Activated T-helper 1 cell treated with anti-CD3 and anti-CD28 coated beads, Interleukin-12 subunit alpha, Interleukin-12 subunit beta, Interleukin-2, Interleukin-4 antibody, amounts not matched to agents 30 ng/mL and 10 ng/mL and 1 ng/mL, durations not matched to agents 14 hours and 24 hours and 36 hours (primary cell): ENCODE measurements at regions of chr17 and their contacts with region 1.

Region 1: GRCh38 chr17:46159686-46160085 is 33.5 kb downstream of the KANSL1 start:
- DNase-seq: no peak
- H3K4me3 Mint-ChIP-seq: no peak overlapping the region
- H3K27ac Mint-ChIP-seq: no peak overlapping the region
- H3K4me1 Mint-ChIP-seq: peaks cover 80% of the 10 kb centered on the region
- H3K27me3 Mint-ChIP-seq: no peaks in the 10 kb centered on the region

Region 2: DNA sequence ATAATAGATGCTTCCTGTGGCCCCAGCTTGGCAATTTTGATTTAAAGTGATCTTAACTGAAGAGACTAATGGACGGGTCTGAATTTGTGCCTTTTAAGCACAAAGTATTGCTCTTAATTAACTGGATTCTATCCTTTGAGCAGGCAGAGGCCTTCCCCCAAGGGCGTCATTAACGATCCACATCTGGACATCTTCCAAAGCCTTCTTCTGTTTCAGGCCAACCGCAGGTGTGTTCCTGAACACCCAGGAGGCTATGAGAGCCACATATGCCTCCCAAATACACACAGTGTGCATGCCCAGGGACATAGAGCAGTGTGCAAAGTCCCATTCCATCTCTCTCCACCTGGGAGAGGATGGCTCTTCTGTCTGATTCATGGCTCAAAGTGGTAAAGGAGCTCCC is 223.1 kb before region 1 on chr17:
- intact Hi-C with region 1: no loop called
- DNase-seq: no peak
- H3K4me3 Mint-ChIP-seq: no peak overlapping the region
- H3K27ac Mint-ChIP-seq: no peak overlapping the region
- H3K4me1 Mint-ChIP-seq: no peaks in the 10 kb centered on the region
- H3K27me3 Mint-ChIP-seq: peaks cover 33% of the 10 kb centered on the region

Region 3: GRCh38 chr17:46013502-46014165 is 146.1 kb before region 1 on chr17:
- intact Hi-C with region 1: no loop called
- DNase-seq: no peak
- H3K4me3 Mint-ChIP-seq: no peak overlapping the region
- H3K27ac Mint-ChIP-seq: no peak overlapping the region
- H3K4me1 Mint-ChIP-seq: no peaks in the 10 kb centered on the region
- H3K27me3 Mint-ChIP-seq: peaks cover 2% of the 10 kb centered on the region

Region 4: GRCh38 chr17:46179375-46179999 is 19.8 kb after region 1 on chr17:
- intact Hi-C with region 1: loop called (anchors 1 kb)
- DNase-seq: no peak
- H3K4me3 Mint-ChIP-seq: peak overlapping the region; percentile 50
- H3K27ac Mint-ChIP-seq: peak overlapping the region; percentile 74
- H3K4me1 Mint-ChIP-seq: peaks cover 73% of the 10 kb centered on the region
- H3K27me3 Mint-ChIP-seq: no peaks in the 10 kb centered on the region

Region 5: DNA sequence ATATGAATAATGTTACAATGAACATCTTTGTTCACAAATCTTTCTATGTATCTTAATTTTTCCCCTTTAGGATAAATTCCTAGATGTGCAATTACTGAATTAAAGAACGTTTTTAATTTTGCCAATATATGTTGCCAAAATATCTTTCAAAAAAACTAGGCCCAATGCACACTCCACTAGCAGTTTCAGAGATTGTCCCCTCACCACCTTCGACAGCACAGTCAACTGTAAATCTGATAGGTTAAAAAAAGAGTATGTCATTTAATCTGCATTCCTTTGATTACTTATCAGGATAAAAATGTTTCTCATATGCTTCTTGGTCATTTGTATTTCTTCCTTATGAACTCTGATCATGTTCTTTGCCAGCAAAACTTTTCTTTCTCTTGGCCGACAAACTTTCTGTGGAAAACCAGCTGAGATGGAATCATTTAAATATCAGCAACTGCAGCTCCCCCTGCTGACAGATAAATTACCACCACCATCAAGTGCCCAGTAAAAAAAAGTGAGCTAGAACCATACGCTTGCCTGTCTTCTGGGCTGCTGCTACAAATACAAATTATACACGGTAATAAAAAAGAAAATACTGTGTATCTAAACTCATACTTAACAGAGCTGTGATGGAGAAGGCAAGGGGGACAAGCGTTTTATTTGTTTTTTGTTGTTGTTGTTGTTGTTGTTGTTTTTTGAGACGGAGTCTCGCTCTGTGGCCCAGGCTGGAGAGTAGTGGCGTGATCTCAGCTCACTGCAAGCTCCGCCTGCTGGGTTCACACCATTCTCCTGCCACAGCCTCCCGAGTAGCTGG is 53.1 kb after region 1 on chr17:
- intact Hi-C with region 1: no loop called
- DNase-seq: peak; percentile 57
- H3K4me3 Mint-ChIP-seq: no peak overlapping the region
- H3K27ac Mint-ChIP-seq: peak overlapping the region; percentile 12
- H3K4me1 Mint-ChIP-seq: peaks cover 14% of the 10 kb centered on the region
- H3K27me3 Mint-ChIP-seq: no peaks in the 10 kb centered on the region